BJ (cell line): ENCODE measurements at regions of chr12 and their contacts with region 1.

Region 1: DNA sequence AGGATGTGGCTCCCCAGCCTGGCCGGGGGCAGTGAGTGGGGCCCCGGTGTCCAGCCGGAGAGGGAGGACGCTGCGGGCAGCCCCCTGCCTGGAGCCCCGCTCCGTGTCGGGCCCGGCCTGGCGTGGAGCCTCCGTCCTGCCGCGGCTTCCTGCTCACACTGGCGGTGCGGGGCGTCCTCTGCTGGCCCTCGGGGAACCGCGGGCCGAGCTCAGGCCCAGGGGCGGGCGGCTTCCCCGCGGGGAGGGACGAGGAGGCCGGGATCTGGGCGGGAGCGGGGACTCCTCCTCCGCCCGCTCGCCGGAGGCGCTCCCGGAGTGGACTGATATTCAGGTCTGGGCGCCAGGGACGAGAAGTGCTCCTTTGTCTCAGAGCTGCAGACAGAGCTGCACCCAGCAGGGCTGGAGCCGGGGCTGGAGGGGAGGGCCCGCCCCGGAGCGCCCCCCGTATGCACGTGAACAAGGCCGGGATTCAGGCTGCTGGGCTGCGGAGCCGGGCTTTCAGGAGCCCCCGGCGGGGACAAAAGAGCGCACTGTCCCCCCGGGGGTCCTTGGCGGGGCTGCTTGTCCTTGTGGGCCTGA is 2.2 kb downstream of the MMP17 start:
- DNase-seq: no peak
- H3K4me3 ChIP-seq: peak overlapping the region; percentile 76
- H3K27me3 ChIP-seq: no peaks in the 10 kb centered on the region
- CTCF ChIP-seq: peak; percentile 52

Region 2: GRCh38 chr12:130916251-130916911 is 914.0 kb before region 1 on chr12:
- CTCF ChIA-PET with region 1: interaction called, 18 read pairs
- POLR2A ChIA-PET with region 1: no interaction called
- DNase-seq: no peak
- H3K4me3 ChIP-seq: peak overlapping the region; percentile 9
- H3K27me3 ChIP-seq: no peaks in the 10 kb centered on the region
- CTCF ChIP-seq: peak; percentile 99

Region 3: DNA sequence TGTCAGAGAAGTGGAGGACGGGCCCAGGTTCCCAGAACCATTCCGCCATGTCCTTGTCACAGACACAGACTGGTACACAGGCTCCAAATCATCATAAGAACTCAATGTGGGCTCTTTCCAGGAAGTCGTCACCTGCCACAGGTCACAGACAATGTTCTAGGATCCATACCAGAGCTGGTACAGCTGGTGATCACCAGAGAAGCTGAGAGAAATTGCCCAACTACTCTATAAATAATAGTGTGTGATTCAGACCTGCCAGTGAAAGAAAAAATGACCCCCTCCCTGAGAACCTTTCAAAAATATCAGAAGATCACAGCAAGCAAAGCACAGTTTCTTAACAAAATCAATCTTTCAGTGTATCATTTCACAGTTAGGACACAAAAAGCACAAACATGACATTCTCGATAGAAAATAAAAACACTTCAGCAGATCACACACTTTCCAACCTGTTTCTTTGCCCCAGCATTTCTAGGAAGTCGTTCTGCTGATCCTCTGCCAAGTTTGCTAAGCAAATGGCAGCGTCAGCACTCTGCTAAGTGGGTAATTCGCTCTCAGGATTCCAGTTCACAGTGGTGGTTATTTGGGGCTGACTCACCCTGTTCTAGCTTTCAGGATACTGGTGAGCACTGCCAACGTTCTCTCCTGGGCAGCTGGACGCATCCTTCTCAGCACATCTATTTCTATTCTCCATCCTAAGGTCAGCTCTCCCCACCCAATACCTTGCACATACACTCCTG is 342.9 kb before region 1 on chr12:
- CTCF ChIA-PET with region 1: no interaction called
- POLR2A ChIA-PET with region 1: no interaction called
- DNase-seq: no peak
- H3K4me3 ChIP-seq: no peak overlapping the region
- H3K27me3 ChIP-seq: no peaks in the 10 kb centered on the region
- CTCF ChIP-seq: no peak